ENCODE measurements at regions of chr5 and their contacts with region 1.

Region 1: GRCh38 chr5:1167728-1168709 is 33.4 kb upstream of the SLC6A19 start:
- DNase-seq: peak; percentile 85
- H3K4me3 ChIP-seq: no peak overlapping the region
- H3K27ac ChIP-seq: no peak overlapping the region
- H3K4me1 ChIP-seq: peaks cover 12% of the 10 kb centered on the region
- H3K27me3 ChIP-seq: no peaks in the 10 kb centered on the region
- CTCF ChIP-seq: peak; percentile 47 to 79 (median 72)
- POLR2A ChIP-seq: no peak

Region 2: DNA sequence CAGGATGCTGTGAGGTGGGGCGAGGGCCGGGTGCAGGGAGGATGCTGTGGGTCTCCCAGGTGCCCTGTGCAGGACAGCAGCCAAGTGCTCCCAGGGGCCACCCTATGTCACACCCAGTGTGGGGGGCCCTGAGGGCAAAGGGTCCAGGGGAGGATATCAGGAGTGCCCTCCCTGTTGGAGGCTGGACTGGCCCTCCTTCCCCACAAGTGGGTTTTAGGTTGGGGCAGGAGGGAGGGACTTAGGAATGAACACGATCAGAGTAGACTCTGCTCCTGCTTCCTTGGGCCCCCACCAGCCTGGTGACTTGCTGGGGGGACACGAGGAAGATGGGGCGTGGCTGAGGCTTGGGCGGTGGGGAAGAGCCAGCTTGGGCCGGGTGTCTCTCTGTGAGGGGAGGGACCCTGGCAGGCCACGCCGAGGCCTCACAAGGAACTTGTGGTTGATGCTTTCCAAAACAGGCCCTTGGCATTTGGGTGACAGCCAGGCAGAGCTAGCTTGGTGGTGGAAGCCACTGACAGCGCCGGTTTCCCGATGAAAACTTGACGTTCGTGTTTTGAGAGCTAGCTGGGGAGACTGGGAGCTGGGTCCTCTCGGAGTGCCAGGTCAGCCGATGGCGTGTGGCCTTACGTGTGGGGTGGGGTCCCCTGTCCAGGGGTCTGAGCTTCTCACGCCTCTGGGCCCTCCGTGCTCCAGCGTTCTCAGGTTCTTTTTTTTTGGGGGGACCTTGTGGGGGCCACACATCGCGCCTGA is 484.8 kb after region 1 on chr5:
- intact Hi-C with region 1: loop called (anchors 10 kb)
- DNase-seq: no peak
- H3K4me3 ChIP-seq: no peak overlapping the region
- H3K27ac ChIP-seq: no peak overlapping the region
- H3K4me1 ChIP-seq: no peaks in the 10 kb centered on the region
- H3K27me3 ChIP-seq: no peaks in the 10 kb centered on the region
- CTCF ChIP-seq: no peak
- POLR2A ChIP-seq: no peak

Measured in testis (tissue), 5 donors.